ENCODE measurements at regions of chr10 and their contacts with region 1.

Region 1: DNA sequence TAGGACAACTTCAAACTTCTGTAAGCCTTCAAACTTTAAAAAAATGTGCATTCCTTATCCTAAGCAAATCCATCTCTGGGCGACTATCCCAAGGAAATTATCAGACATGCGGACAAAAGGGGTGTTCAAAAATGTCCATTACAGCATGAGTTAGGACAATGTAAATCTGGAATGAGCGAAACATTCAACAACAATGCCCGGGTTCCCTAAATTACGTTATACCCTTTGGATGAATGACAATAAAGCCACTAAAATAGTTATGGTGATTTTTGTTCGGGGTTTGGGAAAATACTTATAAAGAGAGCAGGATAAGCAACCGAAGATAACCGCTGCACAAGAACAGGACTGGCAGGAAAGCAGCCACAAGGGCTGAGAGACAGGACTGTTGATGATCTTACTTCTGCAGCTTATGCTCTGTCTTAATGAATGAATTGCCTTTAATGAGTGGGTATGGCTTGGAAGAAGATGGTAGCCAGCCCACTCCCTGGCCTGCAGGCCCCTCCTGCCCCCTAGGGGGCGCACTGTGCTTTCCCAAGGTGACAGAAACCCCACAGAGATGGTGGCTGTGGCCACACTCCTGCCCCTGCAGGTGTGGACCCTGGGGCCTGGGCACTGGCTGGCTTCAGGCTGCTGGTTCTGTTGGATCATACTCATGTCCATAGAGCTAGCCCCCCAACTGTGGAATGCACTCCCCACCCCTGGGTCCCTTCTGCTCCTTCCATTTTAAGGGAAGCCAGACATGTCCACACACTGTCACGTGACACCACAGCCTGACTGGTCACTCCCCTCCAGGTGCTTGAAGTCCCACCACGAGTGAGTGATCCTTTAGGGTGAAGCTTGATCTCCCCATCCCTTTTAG is 45.0 kb downstream of the ZCCHC24 start:
- DNase-seq: peak in 1 of 2 experiments; percentile 89
- H3K4me3 ChIP-seq: no peak overlapping the region
- H3K27ac ChIP-seq: no peak overlapping the region
- H3K4me1 ChIP-seq: peaks cover 8 to 30% (median 15%) of the 10 kb centered on the region in 4 experiments
- H3K27me3 ChIP-seq: no peaks in the 10 kb centered on the region; a peak in 1 of 7 replicates
- CTCF ChIP-seq: peak; percentile 80 to 95 (median 86)
- EP300 ChIP-seq: no peak
- POLR2A ChIP-seq: no peak
- RAD21 ChIP-seq: peak; percentile 69 to 78

Region 2: GRCh38 chr10:79159141-79159651 is 241.2 kb before region 1 on chr10:
- CTCF ChIA-PET with region 1: no interaction called
- POLR2A ChIA-PET with region 1: no interaction called
- DNase-seq: no peak
- H3K4me3 ChIP-seq: no peak overlapping the region
- H3K27ac ChIP-seq: peak overlapping the region; percentile 39
- H3K4me1 ChIP-seq: peaks cover 21 to 44% (median 33%) of the 10 kb centered on the region in 4 experiments
- H3K27me3 ChIP-seq: no peaks in the 10 kb centered on the region; a peak in 1 of 7 replicates
- CTCF ChIP-seq: no peak
- EP300 ChIP-seq: no peak
- POLR2A ChIP-seq: no peak
- RAD21 ChIP-seq: no peak

Region 3: GRCh38 chr10:79381804-79382221 is 18.6 kb before region 1 on chr10:
- CTCF ChIA-PET with region 1: interaction called, 65 read pairs
- POLR2A ChIA-PET with region 1: interaction called, 4 read pairs
- DNase-seq: peak in 1 of 2 experiments; percentile 47
- H3K4me3 ChIP-seq: no peak overlapping the region
- H3K27ac ChIP-seq: no peak overlapping the region
- H3K4me1 ChIP-seq: peaks cover 0 to 6% (median 1%) of the 10 kb centered on the region in 4 experiments; a peak in 2 of 7 replicates
- H3K27me3 ChIP-seq: no peaks in the 10 kb centered on the region; a peak in 1 of 7 replicates
- CTCF ChIP-seq: no peak
- EP300 ChIP-seq: no peak
- POLR2A ChIP-seq: no peak
- RAD21 ChIP-seq: no peak

Region 4: DNA sequence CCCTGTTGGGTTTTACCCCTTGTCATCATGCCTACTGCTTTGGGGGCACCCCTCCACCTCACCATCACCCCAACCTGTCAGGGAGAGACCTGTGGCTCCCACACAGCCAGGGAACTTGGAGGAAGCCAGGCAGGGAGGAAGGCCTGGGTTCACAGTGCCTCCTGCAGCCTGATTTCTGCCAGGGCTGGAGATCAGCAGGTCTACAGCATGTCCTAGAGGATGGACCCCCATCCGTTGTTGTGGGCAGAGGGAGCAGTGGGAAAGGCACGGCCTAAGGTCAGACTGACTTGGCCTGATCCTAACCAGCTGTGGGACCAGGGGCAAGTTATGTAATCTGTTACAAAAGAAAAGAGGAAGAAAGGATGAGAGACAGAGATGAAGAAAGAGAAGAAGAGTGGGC is 16.9 kb after region 1 on chr10:
- CTCF ChIA-PET with region 1: interaction called, 12 read pairs
- POLR2A ChIA-PET with region 1: no interaction called
- DNase-seq: no peak
- H3K4me3 ChIP-seq: no peak overlapping the region
- H3K27ac ChIP-seq: no peak overlapping the region
- H3K4me1 ChIP-seq: peaks cover 0 to 8% (median 3%) of the 10 kb centered on the region in 4 experiments; a peak in 6 of 7 replicates
- H3K27me3 ChIP-seq: no peaks in the 10 kb centered on the region
- CTCF ChIP-seq: peak in 2 of 3 experiments; percentile 4 to 9; a peak in 2 of 4 replicates
- EP300 ChIP-seq: no peak
- POLR2A ChIP-seq: no peak
- RAD21 ChIP-seq: peak in 1 of 2 experiments; percentile 13; a peak in 1 of 4 replicates

Region 5: DNA sequence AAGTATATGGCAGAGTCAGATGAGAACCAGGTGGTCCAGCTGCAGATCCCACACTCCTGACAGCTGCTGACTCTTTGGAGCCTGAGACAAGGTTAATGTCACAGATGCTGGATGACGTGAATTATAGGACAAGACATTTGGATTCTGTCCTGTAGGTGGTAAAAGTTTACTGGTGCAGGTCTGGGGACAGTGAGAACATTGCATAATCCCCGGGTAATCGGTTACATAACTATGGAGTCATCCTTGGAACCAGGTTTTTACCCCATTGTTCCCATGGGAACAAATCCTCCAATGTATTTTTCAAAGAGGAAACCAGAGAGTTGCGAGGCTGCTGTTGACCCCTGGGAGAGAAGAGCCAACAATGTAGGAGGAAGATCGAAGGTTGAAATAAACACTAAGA is 72.6 kb after region 1 on chr10:
- CTCF ChIA-PET with region 1: interaction called, 37 read pairs
- POLR2A ChIA-PET with region 1: interaction called, 3 read pairs
- DNase-seq: no peak
- H3K4me3 ChIP-seq: no peak overlapping the region
- H3K27ac ChIP-seq: no peak overlapping the region
- H3K4me1 ChIP-seq: peaks cover 0 to 4% (median 0%) of the 10 kb centered on the region in 4 experiments; a peak in 1 of 7 replicates
- H3K27me3 ChIP-seq: no peaks in the 10 kb centered on the region
- CTCF ChIP-seq: no peak
- EP300 ChIP-seq: no peak
- POLR2A ChIP-seq: no peak
- RAD21 ChIP-seq: no peak

Region 6: DNA sequence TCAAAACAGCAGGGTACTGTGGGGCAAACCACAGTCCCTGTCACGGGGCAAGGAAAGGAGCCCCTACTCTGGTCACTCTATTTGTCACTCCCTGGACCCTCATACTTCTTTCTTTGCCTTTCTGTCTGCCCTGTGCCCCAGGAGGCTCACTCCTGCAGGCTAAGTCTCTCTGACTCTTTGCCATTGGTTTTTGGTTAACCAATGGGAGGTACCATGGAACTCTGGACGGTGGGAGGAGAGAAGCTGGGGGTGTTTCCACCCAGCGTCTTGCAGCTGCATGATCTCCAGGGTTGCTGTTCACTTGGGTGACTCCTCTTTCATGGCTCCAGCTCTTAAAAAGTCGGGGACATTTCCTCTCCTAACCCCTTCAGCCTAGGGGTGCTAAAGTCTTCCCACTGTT is 96.5 kb after region 1 on chr10:
- CTCF ChIA-PET with region 1: interaction called, 20 read pairs
- POLR2A ChIA-PET with region 1: no interaction called
- DNase-seq: no peak
- H3K4me3 ChIP-seq: no peak overlapping the region
- H3K27ac ChIP-seq: no peak overlapping the region
- H3K4me1 ChIP-seq: no peaks in the 10 kb centered on the region
- H3K27me3 ChIP-seq: peaks cover 0 to 2% (median 0%) of the 10 kb centered on the region in 4 experiments; a peak in 3 of 7 replicates
- CTCF ChIP-seq: no peak
- EP300 ChIP-seq: no peak
- POLR2A ChIP-seq: no peak
- RAD21 ChIP-seq: no peak

Measured in H1 (cell line).